MCF 10A (cell line): ENCODE measurements at regions of chr22 and their contacts with region 1.

Region 1: GRCh38 chr22:50498322-50498890 is 9.1 kb downstream of the LMF2 start:
- DNase-seq: peak; percentile 84
- H3K4me3 Mint-ChIP-seq: no peak overlapping the region
- H3K27ac Mint-ChIP-seq: no peak overlapping the region
- H3K4me1 Mint-ChIP-seq: peaks cover 7% of the 10 kb centered on the region
- H3K27me3 Mint-ChIP-seq: no peaks in the 10 kb centered on the region
- CTCF ChIP-seq: peak; percentile 64

Region 2: GRCh38 chr22:50444663-50445062 is 53.7 kb before region 1 on chr22:
- CTCF ChIA-PET with region 1: interaction called, 6 read pairs
- POLR2A ChIA-PET with region 1: no interaction called
- intact Hi-C with region 1: loop called (anchors 1 kb)
- DNase-seq: peak; percentile 37
- H3K4me3 Mint-ChIP-seq: no peak overlapping the region
- H3K27ac Mint-ChIP-seq: no peak overlapping the region
- H3K4me1 Mint-ChIP-seq: no peaks in the 10 kb centered on the region
- H3K27me3 Mint-ChIP-seq: no peaks in the 10 kb centered on the region
- CTCF ChIP-seq: no peak

Region 3: GRCh38 chr22:50485201-50486131 is 12.9 kb before region 1 on chr22:
- CTCF ChIA-PET with region 1: interaction called, 7 read pairs
- POLR2A ChIA-PET with region 1: interaction called, 3 read pairs
- intact Hi-C with region 1: loop called (anchors 2 kb)
- DNase-seq: peak; percentile 68
- H3K4me3 Mint-ChIP-seq: no peak overlapping the region
- H3K27ac Mint-ChIP-seq: no peak overlapping the region
- H3K4me1 Mint-ChIP-seq: peaks cover 15% of the 10 kb centered on the region
- H3K27me3 Mint-ChIP-seq: no peaks in the 10 kb centered on the region
- CTCF ChIP-seq: no peak

Region 4: DNA sequence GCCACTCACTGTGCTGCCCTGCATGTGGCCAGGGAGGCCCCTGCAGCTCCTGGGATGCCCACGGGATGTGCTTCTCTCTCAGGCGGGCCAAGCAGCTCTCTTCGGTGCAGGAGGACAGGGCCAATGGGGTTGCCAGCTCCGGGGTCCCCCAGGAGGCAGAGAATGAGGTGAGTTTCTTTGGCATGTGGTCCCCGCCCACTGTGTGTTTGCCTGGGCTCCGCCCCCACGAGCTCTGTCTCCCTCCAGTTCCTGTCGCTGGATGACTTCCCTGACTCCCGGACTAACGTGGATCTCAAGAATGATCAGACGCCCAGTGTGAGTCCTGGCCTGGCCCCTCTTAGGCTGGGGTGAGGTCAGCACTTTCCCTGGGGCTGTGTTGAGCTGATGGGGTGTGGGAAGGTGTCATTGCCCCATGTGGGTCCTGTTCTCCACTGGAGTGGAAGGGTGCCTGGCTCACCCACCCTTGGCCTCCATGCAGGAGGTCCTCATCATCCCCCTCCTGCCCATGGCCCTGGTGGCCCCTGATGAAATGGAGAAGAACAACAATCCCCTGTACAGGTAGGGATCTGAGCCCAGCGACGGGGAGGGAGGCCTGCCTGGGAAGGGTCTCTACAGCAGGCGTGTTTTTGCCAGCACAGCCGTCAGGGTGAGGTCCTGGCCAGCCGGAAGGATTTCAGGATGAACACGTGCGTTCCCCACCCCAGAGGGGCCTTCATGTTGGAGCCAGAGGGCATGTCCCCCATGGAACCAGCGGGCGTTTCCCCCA is 19.3 kb after region 1 on chr22:
- CTCF ChIA-PET with region 1: no interaction called
- POLR2A ChIA-PET with region 1: no interaction called
- intact Hi-C with region 1: no loop called
- DNase-seq: no peak
- H3K4me3 Mint-ChIP-seq: no peak overlapping the region
- H3K27ac Mint-ChIP-seq: no peak overlapping the region
- H3K4me1 Mint-ChIP-seq: no peaks in the 10 kb centered on the region
- H3K27me3 Mint-ChIP-seq: no peaks in the 10 kb centered on the region
- CTCF ChIP-seq: no peak